Adrenal gland (tissue), 19 donors: ENCODE measurements at regions of chr9 and their contacts with region 1.

Region 1: DNA sequence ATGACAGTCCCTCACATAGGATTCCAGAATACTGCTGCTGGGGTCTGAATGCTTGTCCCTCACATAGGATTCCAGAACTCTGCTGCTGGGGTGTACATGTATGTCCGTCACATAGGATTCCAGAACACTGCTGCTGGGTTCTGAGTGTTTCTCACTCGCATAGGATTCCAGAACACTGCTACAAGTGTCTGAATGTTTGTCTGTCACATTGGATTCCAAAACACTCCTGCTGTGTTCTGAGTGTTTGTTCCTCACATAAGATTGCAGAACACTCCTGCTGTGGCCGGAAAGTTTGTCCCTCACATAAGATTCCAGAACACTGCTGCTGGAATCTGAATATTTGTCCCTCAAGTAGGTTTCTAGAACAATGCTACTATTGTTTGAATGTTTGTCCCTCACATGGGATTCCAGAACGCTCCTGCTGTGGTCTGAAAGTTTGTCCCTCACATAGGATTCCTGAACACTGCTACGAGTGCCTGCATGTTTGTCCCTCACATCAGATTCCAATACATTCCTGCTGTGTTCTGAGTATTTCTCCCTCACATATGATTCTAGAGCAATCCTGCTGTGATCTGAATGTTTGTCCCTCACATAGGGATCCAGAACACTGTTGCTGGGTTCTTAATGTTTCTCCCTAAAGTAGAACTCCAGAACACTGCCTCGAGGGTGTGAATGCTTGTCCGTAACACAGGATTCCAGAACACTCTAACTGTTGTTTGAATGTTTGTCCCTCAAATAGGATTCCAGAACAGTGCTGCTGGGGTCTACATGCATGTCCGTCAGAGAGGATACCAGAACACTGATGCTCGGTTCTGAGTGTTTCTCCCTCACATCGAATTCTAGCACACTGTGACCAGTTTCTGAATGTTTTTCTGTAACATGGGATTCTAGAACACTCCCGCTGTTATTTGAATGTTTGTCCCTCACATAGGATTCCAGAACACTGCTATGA is 200.4 kb downstream of the FOXD4L6 start:
- DNase-seq: no peak
- H3K4me3 ChIP-seq: no peak overlapping the region
- H3K27ac ChIP-seq: no peak overlapping the region
- H3K4me1 ChIP-seq: no peaks in the 10 kb centered on the region
- H3K27me3 ChIP-seq: no peaks in the 10 kb centered on the region
- CTCF ChIP-seq: no peak
- POLR2A ChIP-seq: no peak

Region 2: DNA sequence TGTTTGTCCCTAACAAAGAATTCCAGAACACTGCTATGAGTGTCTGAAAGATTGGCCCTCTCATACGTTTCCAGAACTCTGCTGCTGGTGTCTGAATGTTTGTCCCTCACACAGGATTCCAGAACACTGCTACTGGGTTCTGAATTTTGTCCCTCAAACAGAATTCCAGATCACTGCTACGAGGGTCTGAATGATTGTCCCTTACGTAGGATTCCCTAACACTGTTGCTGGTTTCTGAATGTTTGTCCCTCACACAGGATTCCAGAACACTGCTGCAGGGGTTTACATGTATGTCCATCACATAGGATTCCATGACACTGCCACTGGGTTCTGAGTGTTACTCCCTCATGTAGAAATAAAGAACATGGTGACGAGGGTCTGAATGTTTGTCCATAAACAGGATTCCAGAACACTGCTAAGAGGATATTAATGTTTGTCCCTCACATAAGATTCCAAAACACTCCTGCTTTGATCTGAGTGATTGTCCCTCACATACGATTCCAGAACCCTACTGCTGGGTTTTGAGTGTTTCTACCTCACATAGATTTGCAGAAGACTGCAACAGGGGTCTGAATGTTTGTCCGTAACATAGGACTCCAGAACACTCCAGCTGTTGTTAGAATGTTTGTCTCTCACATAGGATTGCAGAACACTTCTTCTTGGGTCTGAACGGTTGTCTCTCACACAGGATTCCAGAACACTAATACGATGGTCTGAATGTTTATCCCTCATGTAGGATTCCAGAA is 14.0 kb before region 1 on chr9:
- intact Hi-C with region 1: loop called in 1 of 2 experiments (anchors 2 kb)
- DNase-seq: no peak
- H3K4me3 ChIP-seq: no peak overlapping the region
- H3K27ac ChIP-seq: no peak overlapping the region
- H3K4me1 ChIP-seq: no peaks in the 10 kb centered on the region
- H3K27me3 ChIP-seq: no peaks in the 10 kb centered on the region
- CTCF ChIP-seq: no peak
- POLR2A ChIP-seq: no peak